Esophagus squamous epithelium (tissue), 5 donors: ENCODE measurements at regions of chr11 and their contacts with region 1.

Region 1: DNA sequence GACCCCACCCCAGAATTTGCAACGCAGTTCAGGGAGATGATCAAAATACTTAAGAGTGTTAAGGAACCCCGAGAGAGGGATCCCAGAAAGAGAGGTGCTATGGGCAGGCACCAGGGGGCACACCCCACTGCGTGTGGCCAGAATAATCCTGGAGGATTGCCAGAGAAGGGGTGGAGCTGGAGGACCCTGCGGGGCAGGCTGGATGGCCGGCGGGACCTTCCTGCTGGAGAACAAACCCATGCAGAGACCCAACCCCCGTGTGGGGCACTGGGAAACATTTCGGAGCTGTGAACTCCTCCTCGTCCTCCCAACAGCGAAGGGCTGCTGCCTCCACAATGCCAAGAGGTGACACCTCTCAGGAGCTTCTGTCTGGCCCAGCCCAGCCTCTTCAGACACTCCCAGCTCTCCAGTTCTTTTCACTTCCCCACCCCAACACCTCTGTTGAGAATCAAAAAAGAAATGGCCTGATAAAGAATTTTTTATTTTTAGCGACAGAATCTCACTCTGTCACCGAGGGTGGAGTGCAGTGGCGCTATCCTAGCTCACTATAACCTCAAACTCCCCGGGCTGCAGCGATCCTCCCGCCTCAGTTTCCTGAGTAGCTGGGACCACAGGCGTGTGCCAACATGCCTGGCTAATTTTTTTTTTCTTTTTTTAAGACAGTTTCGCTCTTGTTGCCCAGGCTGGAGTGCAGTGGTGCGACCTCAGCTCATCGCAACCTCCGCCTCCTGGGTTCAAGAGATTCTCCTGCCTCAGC is 25.6 kb downstream of the RHOD start:
- DNase-seq: no peak
- H3K4me3 ChIP-seq: peak overlapping the region in 3 of 4 donors; percentile 17 to 45 (median 24)
- H3K27ac ChIP-seq: peak overlapping the region in 3 of 4 donors; percentile 52 to 80 (median 77)
- H3K4me1 ChIP-seq: peaks cover 26 to 43% (median 31%) of the 10 kb centered on the region in 3 donors
- H3K27me3 ChIP-seq: no peaks in the 10 kb centered on the region
- CTCF ChIP-seq: peak in 2 of 6 experiments; percentile 12 to 29
- POLR2A ChIP-seq: no peak

Region 2: GRCh38 chr11:67160874-67161783 is 78.9 kb after region 1 on chr11:
- intact Hi-C with region 1: loop called (anchors 10 kb)
- DNase-seq: no peak
- H3K4me3 ChIP-seq: no peak overlapping the region
- H3K27ac ChIP-seq: no peak overlapping the region
- H3K4me1 ChIP-seq: peaks cover 0 to 46% (median 0%) of the 10 kb centered on the region in 3 donors
- H3K27me3 ChIP-seq: no peaks in the 10 kb centered on the region
- CTCF ChIP-seq: peak in 2 of 6 experiments; percentile 8 to 11
- POLR2A ChIP-seq: no peak

Region 3: DNA sequence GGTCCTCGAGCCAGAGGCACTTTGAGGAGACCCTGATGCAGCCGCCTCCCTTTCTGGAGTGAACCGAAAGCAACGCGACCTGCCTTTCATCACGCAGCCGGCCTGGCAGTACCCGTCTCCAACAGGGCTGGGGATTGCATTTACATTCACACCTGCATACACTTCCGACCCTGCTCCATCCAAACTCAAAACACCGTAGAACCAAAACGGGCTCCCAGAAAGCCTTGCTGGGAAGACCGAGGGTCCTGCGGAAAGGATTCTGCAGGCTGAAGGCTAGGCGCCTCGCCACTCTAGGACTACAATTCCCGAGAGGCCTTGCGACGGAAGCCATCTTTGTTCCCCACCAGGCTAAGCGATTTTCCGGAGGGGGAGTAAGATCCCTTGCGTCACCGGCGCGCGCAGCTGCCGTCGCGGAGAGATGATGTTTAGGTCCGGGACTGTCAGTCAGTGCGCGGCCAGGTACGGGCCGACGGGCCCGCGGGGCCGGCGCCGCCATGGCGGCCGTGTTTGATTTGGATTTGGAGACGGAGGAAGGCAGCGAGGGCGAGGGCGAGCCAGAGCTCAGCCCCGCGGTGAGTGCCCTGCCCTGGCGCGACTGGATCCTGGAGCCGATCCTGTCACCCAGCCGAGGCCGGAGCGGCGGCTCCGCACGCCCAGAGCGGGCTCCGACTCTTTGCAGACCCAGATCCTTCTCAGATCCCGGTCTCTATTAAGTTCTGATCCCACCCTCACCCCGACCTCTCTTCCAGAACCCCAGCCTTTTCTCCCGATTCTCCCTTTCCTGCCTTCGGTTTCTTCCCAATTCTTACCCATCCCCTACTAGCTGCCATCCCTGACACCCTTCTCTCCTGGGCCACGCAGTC is 346.1 kb after region 1 on chr11 and contains the start of gene RPS6KB2:
- intact Hi-C with region 1: no loop called
- DNase-seq: peak; percentile 94
- H3K4me3 ChIP-seq: peak within 1 kb of the TSS; percentile 85 to 96 (median 90)
- H3K27ac ChIP-seq: peak within 1 kb of the TSS; percentile 93 to 97 (median 95)
- H3K4me1 ChIP-seq: peaks cover 17 to 52% (median 22%) of the 10 kb centered on the region in 3 donors
- H3K27me3 ChIP-seq: no peaks in the 10 kb centered on the region
- CTCF ChIP-seq: peak in 2 of 6 experiments; percentile 6 to 50
- POLR2A ChIP-seq: peak in 3 of 4 donors; percentile 95 to 96 (median 95)
- total RNA-seq, gene RPS6KB2: 67.5 to 121 (median 113) TPM